H1 (cell line): ENCODE measurements at regions of chr12 and their contacts with region 1.

Region 1: DNA sequence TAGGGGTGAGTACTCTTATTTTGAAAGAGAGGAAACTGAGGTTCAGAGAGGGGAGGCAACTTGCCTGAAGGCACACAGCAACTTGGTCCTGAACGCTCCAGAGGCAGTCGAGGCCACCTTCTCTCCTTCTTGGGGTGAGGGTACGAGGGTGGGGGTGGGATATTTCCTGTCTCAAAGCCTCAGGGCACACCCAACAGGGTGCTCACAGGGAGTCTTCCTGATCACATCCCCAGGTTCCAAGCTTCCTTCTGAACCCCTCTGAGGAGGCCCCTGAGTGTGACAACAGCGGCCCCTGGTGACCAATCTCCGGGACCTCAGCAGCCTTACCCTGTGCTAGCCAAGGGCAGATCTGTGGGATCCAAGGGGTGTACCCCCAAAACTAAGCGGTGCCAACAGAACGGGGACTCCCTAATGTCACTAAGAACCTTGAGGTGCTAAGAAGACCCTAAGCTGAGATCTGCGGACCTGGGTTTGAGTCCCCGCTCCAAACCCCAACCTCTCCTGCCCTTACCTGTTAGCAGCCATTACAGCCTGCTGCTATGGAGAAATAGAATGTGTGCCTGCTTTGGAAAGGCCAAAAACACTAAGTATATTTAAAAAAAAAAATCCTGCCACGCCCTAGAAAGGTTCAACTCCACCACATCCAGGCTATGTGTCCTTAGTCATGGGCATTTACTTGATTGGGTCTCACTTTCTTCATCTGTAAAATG is 57.9 kb downstream of the TRPV4 start:
- DNase-seq: peak; percentile 31 to 91
- H3K4me3 ChIP-seq: no peak overlapping the region
- H3K27ac ChIP-seq: no peak overlapping the region
- H3K4me1 ChIP-seq: peaks cover 0 to 10% (median 3%) of the 10 kb centered on the region in 4 experiments; a peak in 2 of 7 replicates
- H3K27me3 ChIP-seq: no peaks in the 10 kb centered on the region
- CTCF ChIP-seq: peak; percentile 87 to 96 (median 91)
- EP300 ChIP-seq: no peak
- POLR2A ChIP-seq: no peak
- RAD21 ChIP-seq: peak; percentile 97

Region 2: DNA sequence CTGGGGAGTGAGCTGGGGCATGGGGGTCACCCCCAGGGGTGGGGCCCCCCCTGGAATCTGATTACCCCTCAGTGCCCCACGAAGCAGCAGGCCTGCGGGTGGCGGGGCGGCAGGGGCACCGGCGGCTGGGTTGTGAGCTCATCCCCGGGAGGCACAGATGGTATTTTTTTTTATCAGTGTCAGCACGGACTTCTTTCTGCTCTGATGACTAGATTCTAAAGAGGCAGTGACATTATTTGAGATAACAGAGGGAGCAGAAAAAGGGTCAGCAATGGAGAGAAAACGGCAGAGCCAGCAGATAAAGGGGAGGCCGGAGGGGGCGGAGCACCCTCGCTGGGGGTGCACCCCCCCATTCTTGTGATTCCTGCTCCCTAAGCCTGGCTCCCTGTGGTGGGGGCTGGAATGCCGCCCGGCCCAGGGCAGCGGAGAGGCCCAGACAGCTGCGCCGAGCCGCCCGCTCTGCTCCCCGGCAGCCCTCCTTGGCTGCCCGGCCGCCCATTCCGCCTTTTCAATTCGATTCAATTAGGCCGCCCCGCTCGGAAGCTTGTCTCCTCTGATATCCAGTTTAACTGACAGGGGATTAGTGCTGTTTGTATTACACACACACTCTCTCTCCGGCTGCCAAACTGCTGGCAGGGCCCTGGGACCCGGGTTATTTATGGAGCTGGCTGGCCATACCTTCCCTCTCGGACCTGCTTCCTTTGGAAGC is 168.9 kb before region 1 on chr12:
- CTCF ChIA-PET with region 1: interaction called, 163 read pairs
- POLR2A ChIA-PET with region 1: no interaction called
- DNase-seq: peak in 1 of 2 experiments; percentile 68
- H3K4me3 ChIP-seq: peak overlapping the region in 1 of 4 experiments; percentile 20; a peak in 1 of 8 replicates
- H3K27ac ChIP-seq: no peak overlapping the region
- H3K4me1 ChIP-seq: peaks cover 0 to 4% (median 1%) of the 10 kb centered on the region in 4 experiments; a peak in 5 of 7 replicates
- H3K27me3 ChIP-seq: 0 out of 7 replicates have a peak, but pooled peaks cover 0 to 2% (median 0%) of the 10 kb centered on the region in 4 experiments
- CTCF ChIP-seq: no peak
- EP300 ChIP-seq: peak in 1 of 2 experiments; percentile 7; a peak in 1 of 3 replicates
- POLR2A ChIP-seq: no peak
- RAD21 ChIP-seq: no peak

Region 3: GRCh38 chr12:109713187-109713984 is 61.9 kb before region 1 on chr12 and contains the start of gene FAM222A:
- CTCF ChIA-PET with region 1: interaction called, 64 read pairs
- POLR2A ChIA-PET with region 1: no interaction called
- DNase-seq: peak; percentile 88 to 94
- H3K4me3 ChIP-seq: peak within 1 kb of the TSS; percentile 36 to 67 (median 44)
- H3K27ac ChIP-seq: no peak within 1 kb of the TSS
- H3K4me1 ChIP-seq: peaks cover 4 to 23% (median 15%) of the 10 kb centered on the region in 4 experiments
- H3K27me3 ChIP-seq: peaks cover 4 to 52% (median 44%) of the 10 kb centered on the region in 4 experiments
- CTCF ChIP-seq: no peak
- EP300 ChIP-seq: peak in 1 of 2 experiments; percentile 52; a peak in 1 of 3 replicates
- POLR2A ChIP-seq: peak in 1 of 2 experiments; percentile 63; a peak in 1 of 3 replicates
- RAD21 ChIP-seq: no peak
- total RNA-seq, gene FAM222A: 1.1 and 1.5 TPM in 2 replicates

Region 4: GRCh38 chr12:109763201-109763841 is 12.0 kb before region 1 on chr12:
- CTCF ChIA-PET with region 1: interaction called, 120 read pairs
- POLR2A ChIA-PET with region 1: interaction called, 3 read pairs
- DNase-seq: peak in 1 of 2 experiments; percentile 35
- H3K4me3 ChIP-seq: no peak overlapping the region
- H3K27ac ChIP-seq: no peak overlapping the region
- H3K4me1 ChIP-seq: peaks cover 0 to 10% (median 4%) of the 10 kb centered on the region in 4 experiments; a peak in 6 of 7 replicates
- H3K27me3 ChIP-seq: no peaks in the 10 kb centered on the region
- CTCF ChIP-seq: no peak
- EP300 ChIP-seq: no peak
- POLR2A ChIP-seq: no peak
- RAD21 ChIP-seq: no peak